Caco-2 (cell line): ENCODE measurements at regions of chr20 and their contacts with region 1.

Region 1: GRCh38 chr20:49685809-49686208 is 27.9 kb downstream of the B4GALT5 start:
- DNase-seq: no peak
- H3K4me3 ChIP-seq: no peak overlapping the region
- H3K4me3 Mint-ChIP-seq: no peak overlapping the region
- H3K27ac Mint-ChIP-seq: no peak overlapping the region
- H3K4me1 ChIP-seq: peaks cover 73% of the 10 kb centered on the region
- H3K4me1 Mint-ChIP-seq: peaks cover 72% of the 10 kb centered on the region
- H3K27me3 ChIP-seq: no peaks in the 10 kb centered on the region
- H3K27me3 Mint-ChIP-seq: no peaks in the 10 kb centered on the region
- CTCF ChIP-seq: no peak

Region 2: GRCh38 chr20:49668181-49668877 is 17.5 kb before region 1 on chr20:
- CTCF ChIA-PET with region 1: no interaction called
- POLR2A ChIA-PET with region 1: no interaction called
- intact Hi-C with region 1: no loop called
- DNase-seq: no peak
- H3K4me3 ChIP-seq: no peak overlapping the region
- H3K4me3 Mint-ChIP-seq: no peak overlapping the region
- H3K27ac Mint-ChIP-seq: no peak overlapping the region
- H3K4me1 ChIP-seq: peaks cover 41% of the 10 kb centered on the region
- H3K4me1 Mint-ChIP-seq: peaks cover 37% of the 10 kb centered on the region
- H3K27me3 ChIP-seq: no peaks in the 10 kb centered on the region
- H3K27me3 Mint-ChIP-seq: no peaks in the 10 kb centered on the region
- CTCF ChIP-seq: no peak

Region 3: DNA sequence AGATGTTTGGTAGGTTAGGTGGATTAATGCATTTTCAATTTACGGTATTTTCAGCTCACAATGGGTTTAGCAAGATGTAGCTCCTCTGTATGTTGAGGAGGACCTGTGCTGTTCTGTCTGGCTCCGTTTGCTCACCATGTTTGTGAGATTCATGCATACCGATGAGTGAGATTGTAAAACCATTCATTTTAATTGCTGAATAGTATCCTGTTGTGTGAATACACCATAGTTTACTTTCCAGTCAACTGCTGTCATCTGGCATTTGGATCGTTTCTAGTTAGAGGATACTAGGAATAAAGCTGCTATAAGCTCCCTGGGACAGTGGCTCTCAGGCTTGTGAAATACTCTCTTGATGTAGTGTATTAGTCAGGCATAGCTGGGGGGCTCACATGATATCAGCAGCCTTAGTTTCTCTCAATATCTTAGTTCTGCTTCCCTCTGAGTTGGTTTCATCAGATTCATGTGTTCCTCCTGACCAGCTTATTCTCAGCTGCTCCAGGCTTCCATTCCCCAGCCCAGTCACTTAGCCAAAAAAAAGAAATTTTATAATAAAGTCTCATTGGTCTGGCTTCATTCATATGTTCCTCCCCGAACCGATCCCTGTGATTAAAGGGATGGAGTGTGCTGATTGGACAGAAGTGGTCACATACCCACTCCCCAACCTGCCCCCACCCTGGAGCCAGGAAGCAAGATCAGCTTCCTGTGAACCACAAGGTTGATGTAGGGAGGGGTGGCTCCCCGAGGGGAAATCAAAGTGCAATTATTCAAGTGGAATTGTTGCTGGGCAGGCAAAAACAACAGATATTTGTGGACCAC is 38.8 kb after region 1 on chr20:
- CTCF ChIA-PET with region 1: interaction called, 12 read pairs
- POLR2A ChIA-PET with region 1: no interaction called
- intact Hi-C with region 1: no loop called
- DNase-seq: no peak
- H3K4me3 ChIP-seq: no peak overlapping the region
- H3K4me3 Mint-ChIP-seq: no peak overlapping the region
- H3K27ac Mint-ChIP-seq: no peak overlapping the region
- H3K4me1 ChIP-seq: peaks cover 8% of the 10 kb centered on the region
- H3K4me1 Mint-ChIP-seq: no peaks in the 10 kb centered on the region
- H3K27me3 ChIP-seq: no peaks in the 10 kb centered on the region
- H3K27me3 Mint-ChIP-seq: no peaks in the 10 kb centered on the region
- CTCF ChIP-seq: no peak

Region 4: GRCh38 chr20:49768204-49769047 is 82.6 kb after region 1 on chr20:
- CTCF ChIA-PET with region 1: no interaction called
- POLR2A ChIA-PET with region 1: no interaction called
- intact Hi-C with region 1: no loop called
- DNase-seq: peak; percentile 95 to 96
- H3K4me3 ChIP-seq: no peak overlapping the region
- H3K4me3 Mint-ChIP-seq: peak overlapping the region; percentile 57
- H3K27ac Mint-ChIP-seq: peak overlapping the region; percentile 93
- H3K4me1 ChIP-seq: peaks cover 57% of the 10 kb centered on the region
- H3K4me1 Mint-ChIP-seq: peaks cover 33% of the 10 kb centered on the region
- H3K27me3 ChIP-seq: no peaks in the 10 kb centered on the region
- H3K27me3 Mint-ChIP-seq: no peaks in the 10 kb centered on the region
- CTCF ChIP-seq: no peak